ENCODE measurements at regions of chr3 and their contacts with region 1.

Region 1: GRCh38 chr3:185764163-185764979 is 60.5 kb downstream of the IGF2BP2 start:
- DNase-seq: no peak
- H3K4me3 ChIP-seq: peak overlapping the region; percentile 22
- H3K27ac ChIP-seq: no peak overlapping the region
- H3K4me1 ChIP-seq: peaks cover 40% of the 10 kb centered on the region
- H3K27me3 ChIP-seq: no peaks in the 10 kb centered on the region
- CTCF ChIP-seq: no peak

Region 2: GRCh38 chr3:185537369-185537970 is 226.9 kb before region 1 on chr3:
- intact Hi-C with region 1: no loop called
- DNase-seq: peak; percentile 41
- H3K4me3 ChIP-seq: no peak overlapping the region
- H3K27ac ChIP-seq: peak overlapping the region; percentile 67
- H3K4me1 ChIP-seq: no peaks in the 10 kb centered on the region
- H3K27me3 ChIP-seq: no peaks in the 10 kb centered on the region
- CTCF ChIP-seq: no peak

Region 3: GRCh38 chr3:185561374-185561943 is 202.9 kb before region 1 on chr3:
- intact Hi-C with region 1: no loop called
- DNase-seq: peak; percentile 29
- H3K4me3 ChIP-seq: no peak overlapping the region
- H3K27ac ChIP-seq: no peak overlapping the region
- H3K4me1 ChIP-seq: peaks cover 6% of the 10 kb centered on the region
- H3K27me3 ChIP-seq: peaks cover 22% of the 10 kb centered on the region
- CTCF ChIP-seq: no peak

Region 4: GRCh38 chr3:185677146-185677829 is 87.1 kb before region 1 on chr3:
- intact Hi-C with region 1: loop called (anchors 10 kb)
- DNase-seq: no peak
- H3K4me3 ChIP-seq: no peak overlapping the region
- H3K27ac ChIP-seq: no peak overlapping the region
- H3K4me1 ChIP-seq: no peaks in the 10 kb centered on the region
- H3K27me3 ChIP-seq: no peaks in the 10 kb centered on the region
- CTCF ChIP-seq: peak; percentile 66

Region 5: DNA sequence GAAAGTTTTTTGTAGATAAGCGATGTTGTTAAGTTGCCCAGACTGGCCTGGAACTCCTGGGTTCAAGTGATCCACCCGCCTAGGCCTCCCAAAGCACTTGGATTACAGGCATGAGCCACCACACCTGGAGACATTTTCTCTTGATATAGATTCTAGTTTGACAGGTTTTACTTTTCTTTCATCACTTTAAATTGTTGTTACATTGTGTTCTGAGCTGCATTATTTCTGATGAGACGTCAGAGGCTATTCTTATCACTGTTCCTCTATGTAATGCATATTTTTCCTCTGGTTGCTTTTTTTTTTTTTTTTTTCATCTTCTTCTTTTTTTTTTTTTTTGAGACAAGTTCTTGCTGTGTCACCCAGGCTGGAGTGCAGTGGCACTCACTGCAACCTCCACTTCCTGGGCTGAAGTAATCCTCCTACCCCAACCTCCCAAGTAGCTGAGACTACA is 132.2 kb after region 1 on chr3:
- intact Hi-C with region 1: no loop called
- DNase-seq: no peak
- H3K4me3 ChIP-seq: no peak overlapping the region
- H3K27ac ChIP-seq: no peak overlapping the region
- H3K4me1 ChIP-seq: no peaks in the 10 kb centered on the region
- H3K27me3 ChIP-seq: no peaks in the 10 kb centered on the region
- CTCF ChIP-seq: no peak

Measured in left ventricle myocardium inferior (tissue), 1 donor.